ENCODE measurements at regions of chr22 and their contacts with region 1.

Region 1: GRCh38 chr22:20783844-20784723 is 10.2 kb downstream of the SERPIND1 start:
- DNase-seq: peak; percentile 72
- ATAC-seq: peak; percentile 78
- H3K4me3 Mint-ChIP-seq: no peak overlapping the region
- H3K27ac Mint-ChIP-seq: no peak overlapping the region
- H3K4me1 Mint-ChIP-seq: peaks cover 14% of the 10 kb centered on the region
- H3K27me3 Mint-ChIP-seq: no peaks in the 10 kb centered on the region

Region 2: DNA sequence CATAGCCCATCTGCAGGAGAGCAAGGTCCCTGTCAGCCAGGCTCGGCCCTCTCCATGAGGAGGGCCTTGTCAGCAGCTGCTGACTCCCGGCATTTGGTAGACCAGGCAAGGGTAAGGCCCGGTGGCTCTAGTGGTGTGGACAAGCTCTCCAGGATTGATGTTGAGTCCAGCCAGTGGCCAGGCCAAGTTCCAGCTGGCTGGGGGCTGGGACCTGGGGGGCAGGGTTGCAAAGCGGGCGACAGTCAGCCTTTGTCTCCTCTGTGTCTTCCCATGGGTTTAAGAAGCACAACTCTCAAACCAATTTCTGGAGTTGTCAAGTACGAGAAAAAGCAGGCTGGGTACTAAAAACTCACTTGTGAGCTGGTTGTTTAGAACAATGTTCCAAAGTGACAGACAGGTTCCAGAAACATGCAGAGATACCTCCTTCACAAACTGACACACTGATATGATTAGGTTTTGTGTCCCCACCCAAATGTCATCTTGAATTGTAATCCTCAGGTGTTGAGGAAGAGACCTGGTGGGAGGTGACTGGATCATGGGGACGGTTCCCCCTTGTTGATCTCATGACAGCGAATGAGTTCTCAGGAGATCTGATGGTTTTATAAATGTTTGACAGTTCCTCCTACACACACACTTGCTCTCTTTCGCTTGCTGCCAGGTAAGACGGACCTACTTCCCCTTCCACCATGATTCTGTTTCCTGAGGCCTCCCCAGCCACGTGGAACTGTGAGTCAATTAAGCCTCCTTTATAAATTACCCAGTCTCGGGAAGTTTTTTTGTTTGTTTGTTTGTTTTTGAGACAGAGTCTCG is 62.5 kb before region 1 on chr22:
- CTCF ChIA-PET with region 1: no interaction called
- DNase-seq: no peak
- ATAC-seq: no peak
- H3K4me3 Mint-ChIP-seq: no peak overlapping the region
- H3K27ac Mint-ChIP-seq: no peak overlapping the region
- H3K4me1 Mint-ChIP-seq: no peaks in the 10 kb centered on the region
- H3K27me3 Mint-ChIP-seq: no peaks in the 10 kb centered on the region

Region 3: GRCh38 chr22:20771918-20772625 is 12.0 kb before region 1 on chr22:
- CTCF ChIA-PET with region 1: interaction called, 30 read pairs
- DNase-seq: no peak
- ATAC-seq: no peak
- H3K4me3 Mint-ChIP-seq: no peak overlapping the region
- H3K27ac Mint-ChIP-seq: no peak overlapping the region
- H3K4me1 Mint-ChIP-seq: peaks cover 10% of the 10 kb centered on the region
- H3K27me3 Mint-ChIP-seq: no peaks in the 10 kb centered on the region

Region 4: GRCh38 chr22:20803696-20804324 is 19.7 kb after region 1 on chr22:
- CTCF ChIA-PET with region 1: interaction called, 26 read pairs
- DNase-seq: peak; percentile 54
- ATAC-seq: peak; percentile 30
- H3K4me3 Mint-ChIP-seq: no peak overlapping the region
- H3K27ac Mint-ChIP-seq: no peak overlapping the region
- H3K4me1 Mint-ChIP-seq: no peaks in the 10 kb centered on the region
- H3K27me3 Mint-ChIP-seq: no peaks in the 10 kb centered on the region